B cell (primary cell): ENCODE measurements at regions of chr16 and their contacts with region 1.

Region 1: GRCh38 chr16:67183627-67184328 is at the start of gene MATCAP1:
- DNase-seq: peak; percentile 98
- ATAC-seq: peak; percentile 96
- H3K4me3 ChIP-seq: peak within 1 kb of the TSS; percentile 66 to 95 (median 76)
- H3K4me3 Mint-ChIP-seq: peak within 1 kb of the TSS; percentile 93
- H3K27ac ChIP-seq: peak within 1 kb of the TSS; percentile 76 to 96
- H3K27ac Mint-ChIP-seq: peak within 1 kb of the TSS; percentile 50
- H3K4me1 ChIP-seq: peaks cover 20 to 22% of the 10 kb centered on the region in 2 donors
- H3K4me1 Mint-ChIP-seq: peaks cover 13% of the 10 kb centered on the region
- H3K27me3 ChIP-seq: peaks cover 0 to 39% (median 8%) of the 10 kb centered on the region in 4 experiments
- H3K27me3 Mint-ChIP-seq: peaks cover 14% of the 10 kb centered on the region
- CTCF ChIP-seq: no peak
- total RNA-seq, gene MATCAP1: 6.2 and 12.4 TPM in 2 replicates

Region 2: DNA sequence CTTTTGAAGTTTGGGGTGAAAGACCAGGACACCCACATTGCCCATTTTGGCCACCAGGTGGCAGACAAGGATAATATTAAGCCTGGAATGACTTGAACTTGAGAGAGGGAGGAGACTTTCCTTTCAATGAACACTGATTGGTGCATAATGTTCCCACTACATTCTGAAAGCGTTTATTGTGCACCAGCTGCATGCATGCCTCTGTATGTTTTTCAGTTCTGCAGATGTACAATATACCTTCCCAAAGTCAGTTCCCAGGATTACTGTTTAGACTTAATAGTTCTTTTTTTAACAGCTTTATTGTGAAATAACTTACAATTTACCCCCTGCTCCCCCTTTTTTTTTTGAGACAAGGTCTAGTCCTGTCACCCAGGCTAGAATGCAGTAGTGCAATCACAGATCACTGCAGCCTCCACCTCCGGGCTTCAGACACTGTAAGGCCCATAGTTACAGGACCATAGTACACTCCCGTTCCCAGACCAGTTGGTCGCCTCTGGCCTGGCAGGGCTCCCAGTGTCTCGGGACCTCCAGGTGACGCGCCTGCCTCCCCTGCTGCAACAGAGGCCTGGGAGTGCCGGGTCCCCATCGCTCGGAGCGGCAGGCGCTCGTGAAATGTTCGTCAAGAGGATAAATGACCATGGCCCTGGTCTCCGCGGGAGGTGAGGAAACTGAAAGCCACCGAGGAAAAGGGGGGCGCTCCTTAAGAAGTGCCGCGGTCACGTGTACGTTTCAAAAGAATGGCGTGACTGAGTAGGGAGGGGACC is 236.3 kb before region 1 on chr16:
- CTCF ChIA-PET with region 1: interaction called, 5 read pairs
- POLR2A ChIA-PET with region 1: no interaction called
- intact Hi-C with region 1: loop called (anchors 1 kb)
- DNase-seq: peak; percentile 86
- ATAC-seq: peak; percentile 90
- H3K4me3 ChIP-seq: peak overlapping the region; percentile 26 to 60 (median 49)
- H3K4me3 Mint-ChIP-seq: peak overlapping the region; percentile 93
- H3K27ac ChIP-seq: no peak overlapping the region
- H3K27ac Mint-ChIP-seq: no peak overlapping the region
- H3K4me1 ChIP-seq: peaks cover 15 to 23% of the 10 kb centered on the region in 2 donors
- H3K4me1 Mint-ChIP-seq: peaks cover 18% of the 10 kb centered on the region
- H3K27me3 ChIP-seq: peaks cover 0 to 35% (median 20%) of the 10 kb centered on the region in 4 experiments
- H3K27me3 Mint-ChIP-seq: peaks cover 40% of the 10 kb centered on the region
- CTCF ChIP-seq: peak; percentile 96

Region 3: GRCh38 chr16:66961065-66961744 is 222.6 kb before region 1 on chr16 and contains the start of gene CES3:
- CTCF ChIA-PET with region 1: interaction called, 5 read pairs
- POLR2A ChIA-PET with region 1: interaction called, 11 read pairs
- intact Hi-C with region 1: no loop called
- DNase-seq: peak; percentile 63
- ATAC-seq: peak; percentile 60
- H3K4me3 ChIP-seq: no peak within 1 kb of the TSS
- H3K4me3 Mint-ChIP-seq: peak within 1 kb of the TSS; percentile 53
- H3K27ac ChIP-seq: peak within 1 kb of the TSS; percentile 20 to 23
- H3K27ac Mint-ChIP-seq: no peak within 1 kb of the TSS
- H3K4me1 ChIP-seq: peaks cover 7 to 14% of the 10 kb centered on the region in 2 donors
- H3K4me1 Mint-ChIP-seq: peaks cover 14% of the 10 kb centered on the region
- H3K27me3 ChIP-seq: no peaks in the 10 kb centered on the region
- H3K27me3 Mint-ChIP-seq: peaks cover 12% of the 10 kb centered on the region
- CTCF ChIP-seq: peak; percentile 69
- total RNA-seq, gene CES3: 0.32 and 0.42 TPM in 2 replicates

Region 4: GRCh38 chr16:67017810-67018488 is 165.8 kb before region 1 on chr16:
- CTCF ChIA-PET with region 1: interaction called, 18 read pairs
- POLR2A ChIA-PET with region 1: no interaction called
- intact Hi-C with region 1: no loop called
- DNase-seq: peak; percentile 80
- ATAC-seq: peak; percentile 74
- H3K4me3 ChIP-seq: no peak overlapping the region
- H3K4me3 Mint-ChIP-seq: no peak overlapping the region
- H3K27ac ChIP-seq: no peak overlapping the region
- H3K27ac Mint-ChIP-seq: no peak overlapping the region
- H3K4me1 ChIP-seq: peaks cover 12 to 13% of the 10 kb centered on the region in 2 donors
- H3K4me1 Mint-ChIP-seq: peaks cover 2% of the 10 kb centered on the region
- H3K27me3 ChIP-seq: peaks cover 0 to 15% (median 7%) of the 10 kb centered on the region in 4 experiments
- H3K27me3 Mint-ChIP-seq: peaks cover 5% of the 10 kb centered on the region
- CTCF ChIP-seq: peak; percentile 53

Region 5: GRCh38 chr16:67109407-67110135 is 74.2 kb before region 1 on chr16 and contains the start of gene PHAF1:
- CTCF ChIA-PET with region 1: no interaction called
- POLR2A ChIA-PET with region 1: no interaction called
- intact Hi-C with region 1: loop called (anchors 2 kb)
- DNase-seq: peak; percentile 95
- ATAC-seq: peak; percentile 94
- H3K4me3 ChIP-seq: peak within 1 kb of the TSS; percentile 68 to 92 (median 84)
- H3K4me3 Mint-ChIP-seq: peak within 1 kb of the TSS; percentile 93
- H3K27ac ChIP-seq: peak within 1 kb of the TSS; percentile 22 to 70
- H3K27ac Mint-ChIP-seq: peak within 1 kb of the TSS; percentile 82
- H3K4me1 ChIP-seq: peaks cover 25 to 34% of the 10 kb centered on the region in 2 donors
- H3K4me1 Mint-ChIP-seq: peaks cover 37% of the 10 kb centered on the region
- H3K27me3 ChIP-seq: no peaks in the 10 kb centered on the region
- H3K27me3 Mint-ChIP-seq: no peaks in the 10 kb centered on the region
- CTCF ChIP-seq: no peak
- total RNA-seq, gene PHAF1: 20.7 and 23.0 TPM in 2 replicates

Region 6: GRCh38 chr16:67246934-67247697 is 63.3 kb after region 1 on chr16 and contains the start of gene FHOD1:
- CTCF ChIA-PET with region 1: interaction called, 10 read pairs
- POLR2A ChIA-PET with region 1: interaction called, 3 read pairs
- intact Hi-C with region 1: loop called (anchors 2 kb)
- DNase-seq: peak; percentile 96
- ATAC-seq: peak; percentile 75
- H3K4me3 ChIP-seq: peak within 1 kb of the TSS; percentile 70 to 97 (median 79)
- H3K4me3 Mint-ChIP-seq: peak within 1 kb of the TSS; percentile 96
- H3K27ac ChIP-seq: peak within 1 kb of the TSS; percentile 16 to 48
- H3K27ac Mint-ChIP-seq: peak within 1 kb of the TSS; percentile 90
- H3K4me1 ChIP-seq: peaks cover 46 to 55% of the 10 kb centered on the region in 2 donors
- H3K4me1 Mint-ChIP-seq: peaks cover 53% of the 10 kb centered on the region
- H3K27me3 ChIP-seq: peaks cover 0 to 17% (median 12%) of the 10 kb centered on the region in 4 experiments
- H3K27me3 Mint-ChIP-seq: peaks cover 9% of the 10 kb centered on the region
- CTCF ChIP-seq: no peak
- total RNA-seq, gene FHOD1: 46.9 and 47.3 TPM in 2 replicates